ENCODE measurements at regions of chr20 and their contacts with region 1.

Region 1: GRCh38 chr20:55009066-55009465 is 533.7 kb downstream of the DOK5 start:
- DNase-seq: no peak
- H3K4me3 ChIP-seq: no peak overlapping the region
- H3K27ac ChIP-seq: no peak overlapping the region
- H3K4me1 ChIP-seq: no peaks in the 10 kb centered on the region
- H3K27me3 ChIP-seq: no peaks in the 10 kb centered on the region
- CTCF ChIP-seq: no peak

Region 2: GRCh38 chr20:55329108-55329507 is 320.0 kb after region 1 on chr20:
- intact Hi-C with region 1: loop called (anchors 5 kb)
- DNase-seq: no peak
- H3K4me3 ChIP-seq: no peak overlapping the region
- H3K27ac ChIP-seq: no peak overlapping the region
- H3K4me1 ChIP-seq: no peaks in the 10 kb centered on the region
- H3K27me3 ChIP-seq: no peaks in the 10 kb centered on the region
- CTCF ChIP-seq: no peak

Measured in tibial artery (tissue), 4 donors.